ENCODE measurements at regions of chr3 and their contacts with region 1.

Region 1: DNA sequence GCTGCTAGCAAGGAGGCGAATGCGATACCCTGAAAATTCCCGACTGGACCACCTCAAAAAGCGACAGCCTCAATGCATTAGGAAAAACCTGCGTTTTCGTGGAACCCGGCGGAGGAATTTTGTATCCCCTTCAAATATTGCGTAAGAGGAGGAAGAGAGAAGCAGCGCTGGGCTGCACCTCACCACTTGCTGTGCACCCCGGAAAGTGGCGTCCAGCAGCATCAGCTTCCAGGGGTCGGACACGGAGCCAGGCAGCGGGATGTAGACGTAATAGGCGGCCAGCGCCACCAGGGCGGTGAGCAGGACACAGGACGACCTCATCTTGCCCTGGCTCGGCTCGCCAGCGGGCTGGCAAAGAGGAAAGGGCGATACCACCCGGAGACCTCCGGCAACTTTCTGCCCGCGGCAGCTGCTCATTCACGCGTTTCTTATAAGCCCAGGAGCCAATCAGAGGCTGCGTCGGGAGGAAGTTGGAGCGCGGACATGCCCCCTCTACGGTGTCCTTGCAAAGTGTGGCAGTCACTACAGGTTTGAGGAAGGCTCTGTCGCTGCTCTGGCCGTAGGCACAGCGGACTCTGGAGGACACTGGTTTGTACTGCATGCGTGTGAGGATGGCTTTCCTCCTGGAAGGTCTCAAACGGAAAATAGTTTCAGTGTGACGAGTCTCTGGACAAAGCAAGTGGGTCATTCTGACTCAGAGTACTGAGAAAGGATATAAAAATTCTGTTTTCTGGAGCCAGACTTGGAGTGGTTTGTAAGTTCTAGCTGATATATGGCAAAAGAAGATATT is at the start of gene NCEH1:
- DNase-seq: peak; percentile 98
- H3K4me3 ChIP-seq: peak within 1 kb of the TSS; percentile 36 to 79 (median 75)
- H3K27ac ChIP-seq: peak within 1 kb of the TSS; percentile 88
- H3K4me1 ChIP-seq: peaks cover 26% of the 10 kb centered on the region
- H3K27me3 ChIP-seq: no peaks in the 10 kb centered on the region
- CTCF ChIP-seq: peak; percentile 75 to 88
- POLR2A ChIP-seq: peak; percentile 99
- total RNA-seq, gene NCEH1: 20.3 and 20.5 TPM in 2 replicates

Region 2: DNA sequence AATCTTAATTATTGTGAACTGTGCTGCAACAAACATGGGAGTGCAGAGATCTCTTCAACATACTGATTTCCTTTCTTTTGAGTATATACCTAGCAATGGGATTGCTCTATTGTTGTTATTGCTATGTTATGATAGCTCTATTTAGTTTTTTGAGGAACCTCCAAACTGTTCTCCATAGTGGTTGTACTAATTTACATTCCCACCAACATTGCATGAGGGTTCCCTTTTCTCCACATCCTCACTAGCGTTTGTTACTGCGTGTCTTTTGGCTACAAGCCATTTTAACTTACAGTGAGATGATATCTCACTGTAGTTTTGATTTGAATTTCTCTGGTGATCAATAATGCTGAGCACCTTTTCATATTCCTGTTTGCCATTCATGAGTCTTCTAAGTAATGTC is 142.2 kb before region 1 on chr3:
- CTCF ChIA-PET with region 1: no interaction called
- POLR2A ChIA-PET with region 1: no interaction called
- dilution Hi-C with region 1: no loop called
- intact Hi-C with region 1: no loop called
- DNase-seq: no peak
- H3K4me3 ChIP-seq: no peak overlapping the region
- H3K27ac ChIP-seq: no peak overlapping the region
- H3K4me1 ChIP-seq: peaks cover 3% of the 10 kb centered on the region
- H3K27me3 ChIP-seq: peaks cover 2 to 5% of the 10 kb centered on the region in 2 experiments
- CTCF ChIP-seq: no peak
- POLR2A ChIP-seq: no peak

Region 3: GRCh38 chr3:172685346-172686214 is 25.3 kb before region 1 on chr3:
- CTCF ChIA-PET with region 1: interaction called, 13 read pairs
- POLR2A ChIA-PET with region 1: no interaction called
- dilution Hi-C with region 1: no loop called
- intact Hi-C with region 1: no loop called
- DNase-seq: no peak
- H3K4me3 ChIP-seq: no peak overlapping the region
- H3K27ac ChIP-seq: no peak overlapping the region
- H3K4me1 ChIP-seq: no peaks in the 10 kb centered on the region
- H3K27me3 ChIP-seq: no peaks in the 10 kb centered on the region
- CTCF ChIP-seq: no peak
- POLR2A ChIP-seq: no peak

Region 4: DNA sequence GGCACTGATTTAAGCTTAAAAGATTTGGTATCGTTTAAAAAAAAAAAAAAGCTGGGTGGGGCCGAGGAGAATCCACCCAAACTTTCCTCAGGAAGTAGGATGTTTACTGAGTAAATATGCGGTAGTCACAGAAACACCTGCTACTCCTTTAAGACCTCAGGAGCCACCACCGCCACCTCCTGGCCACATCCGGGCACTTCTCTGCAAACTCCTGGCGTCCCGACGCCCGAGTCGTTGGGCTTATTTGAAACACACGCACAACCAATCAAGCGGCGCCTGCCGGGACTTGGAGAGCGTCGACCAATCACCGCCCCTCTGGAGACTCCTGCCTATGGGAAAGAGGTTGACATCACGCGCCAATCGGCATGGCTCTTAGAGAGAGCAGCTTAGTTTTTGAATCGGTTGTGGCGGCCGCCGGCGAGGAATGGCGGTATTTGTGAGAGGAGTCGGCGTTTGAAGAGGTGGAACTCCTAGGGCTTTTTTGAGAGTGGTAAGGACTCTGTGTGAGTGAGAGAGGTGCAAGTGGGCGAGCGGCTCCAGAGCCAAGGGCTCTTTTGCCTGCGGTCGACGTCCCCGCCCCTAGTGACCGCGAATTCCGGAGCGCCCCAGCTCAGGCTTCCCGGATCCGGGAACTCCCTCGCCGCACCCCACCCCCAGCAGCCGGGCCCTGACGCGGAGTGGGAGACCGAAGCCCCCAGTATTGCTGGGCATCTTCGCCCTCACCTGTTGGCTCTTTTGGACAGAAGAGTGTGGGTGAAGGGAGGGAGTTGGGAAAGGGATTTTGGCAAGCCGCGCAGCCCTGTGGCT is 39.7 kb after region 1 on chr3 and contains the start of gene ECT2:
- CTCF ChIA-PET with region 1: interaction called, 16 read pairs
- POLR2A ChIA-PET with region 1: interaction called, 10 read pairs
- dilution Hi-C with region 1: no loop called
- intact Hi-C with region 1: loop called (anchors 1 kb)
- DNase-seq: peak; percentile 99
- H3K4me3 ChIP-seq: peak within 1 kb of the TSS; percentile 63 to 100 (median 100)
- H3K27ac ChIP-seq: peak within 1 kb of the TSS; percentile 97
- H3K4me1 ChIP-seq: peaks cover 32% of the 10 kb centered on the region
- H3K27me3 ChIP-seq: no peaks in the 10 kb centered on the region
- CTCF ChIP-seq: peak; percentile 79 to 80
- POLR2A ChIP-seq: peak; percentile 63
- total RNA-seq, gene ECT2: 44.7 and 47.5 TPM in 2 replicates

Region 5: GRCh38 chr3:172787746-172788145 is 76.9 kb after region 1 on chr3:
- CTCF ChIA-PET with region 1: no interaction called
- POLR2A ChIA-PET with region 1: no interaction called
- dilution Hi-C with region 1: no loop called
- intact Hi-C with region 1: no loop called
- DNase-seq: peak; percentile 38
- H3K4me3 ChIP-seq: no peak overlapping the region
- H3K27ac ChIP-seq: no peak overlapping the region
- H3K4me1 ChIP-seq: peaks cover 7% of the 10 kb centered on the region
- H3K27me3 ChIP-seq: no peaks in the 10 kb centered on the region
- CTCF ChIP-seq: no peak
- POLR2A ChIP-seq: no peak

Measured in endothelial cell of umbilical vein (primary cell).